ENCODE measurements at regions of chr2 and their contacts with region 1.

Region 1: GRCh38 chr2:42828487-42829425 is 36.4 kb upstream of the HAAO start:
- DNase-seq: peak; percentile 76 to 85 (median 82)
- H3K4me3 ChIP-seq: no peak overlapping the region
- H3K27ac ChIP-seq: no peak overlapping the region
- H3K4me1 ChIP-seq: peaks cover 0 to 26% (median 22%) of the 10 kb centered on the region in 4 experiments
- H3K27me3 ChIP-seq: no peaks in the 10 kb centered on the region

Region 2: GRCh38 chr2:42296226-42296625 is 532.5 kb before region 1 on chr2:
- CTCF ChIA-PET with region 1: no interaction called
- POLR2A ChIA-PET with region 1: no interaction called
- DNase-seq: no peak
- H3K4me3 ChIP-seq: no peak overlapping the region
- H3K27ac ChIP-seq: no peak overlapping the region
- H3K4me1 ChIP-seq: peaks cover 0 to 14% (median 3%) of the 10 kb centered on the region in 4 experiments
- H3K27me3 ChIP-seq: no peaks in the 10 kb centered on the region

Region 3: GRCh38 chr2:42810121-42810970 is 18.4 kb before region 1 on chr2:
- CTCF ChIA-PET with region 1: interaction called, 23 read pairs
- POLR2A ChIA-PET with region 1: interaction called, 7 read pairs
- DNase-seq: peak; percentile 95 to 98 (median 97)
- H3K4me3 ChIP-seq: peak overlapping the region; percentile 62 to 91 (median 75)
- H3K27ac ChIP-seq: peak overlapping the region; percentile 90 to 91
- H3K4me1 ChIP-seq: peaks cover 0 to 23% (median 18%) of the 10 kb centered on the region in 4 experiments
- H3K27me3 ChIP-seq: no peaks in the 10 kb centered on the region

Region 4: DNA sequence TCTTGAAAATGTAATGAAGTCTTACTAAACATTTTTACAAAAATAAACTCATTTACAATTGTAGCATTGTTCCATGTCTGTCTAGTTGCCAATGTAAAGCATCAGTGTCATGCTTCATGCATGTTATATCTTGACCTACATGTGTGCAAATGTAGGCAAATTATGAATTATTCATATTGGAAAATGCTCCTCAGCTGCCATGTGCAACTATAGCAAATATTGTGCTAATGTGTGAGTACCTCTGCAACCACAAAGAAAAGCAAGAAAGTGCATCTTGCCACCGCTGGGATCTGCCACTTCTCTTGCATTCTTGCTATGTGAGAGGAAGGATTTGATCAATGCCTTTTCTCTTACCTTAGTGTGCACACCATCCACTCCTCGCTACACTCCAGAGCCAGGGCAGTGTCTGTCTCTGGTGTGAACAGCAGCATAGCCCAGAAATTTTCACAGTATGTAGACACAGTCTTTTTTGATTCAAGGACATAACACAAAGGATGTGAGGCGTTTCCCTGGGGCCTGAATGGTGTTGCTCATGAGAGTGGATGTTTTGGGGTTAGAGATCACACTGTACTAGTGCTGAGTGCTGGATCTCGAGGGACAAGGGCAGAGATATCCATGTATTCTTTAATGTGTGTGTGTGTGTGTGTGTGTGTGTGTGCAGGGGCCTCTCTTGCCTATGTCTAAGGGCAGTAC is 11.2 kb after region 1 on chr2:
- CTCF ChIA-PET with region 1: interaction called, 21 read pairs
- POLR2A ChIA-PET with region 1: no interaction called
- DNase-seq: no peak
- H3K4me3 ChIP-seq: no peak overlapping the region
- H3K27ac ChIP-seq: no peak overlapping the region
- H3K4me1 ChIP-seq: peaks cover 0 to 17% (median 12%) of the 10 kb centered on the region in 4 experiments
- H3K27me3 ChIP-seq: no peaks in the 10 kb centered on the region

Region 5: GRCh38 chr2:42859006-42859552 is 30.3 kb after region 1 on chr2:
- CTCF ChIA-PET with region 1: interaction called, 34 read pairs
- POLR2A ChIA-PET with region 1: no interaction called
- DNase-seq: peak; percentile 84 to 93 (median 89)
- H3K4me3 ChIP-seq: no peak overlapping the region
- H3K27ac ChIP-seq: no peak overlapping the region
- H3K4me1 ChIP-seq: peaks cover 2 to 57% (median 45%) of the 10 kb centered on the region in 4 experiments
- H3K27me3 ChIP-seq: no peaks in the 10 kb centered on the region

Region 6: GRCh38 chr2:43484323-43484930 is 655.7 kb after region 1 on chr2:
- CTCF ChIA-PET with region 1: interaction called, 18 read pairs
- POLR2A ChIA-PET with region 1: no interaction called
- DNase-seq: peak; percentile 89 to 92 (median 91)
- H3K4me3 ChIP-seq: no peak overlapping the region
- H3K27ac ChIP-seq: no peak overlapping the region
- H3K4me1 ChIP-seq: peaks cover 8 to 29% (median 12%) of the 10 kb centered on the region in 4 experiments
- H3K27me3 ChIP-seq: no peaks in the 10 kb centered on the region

Region 7: DNA sequence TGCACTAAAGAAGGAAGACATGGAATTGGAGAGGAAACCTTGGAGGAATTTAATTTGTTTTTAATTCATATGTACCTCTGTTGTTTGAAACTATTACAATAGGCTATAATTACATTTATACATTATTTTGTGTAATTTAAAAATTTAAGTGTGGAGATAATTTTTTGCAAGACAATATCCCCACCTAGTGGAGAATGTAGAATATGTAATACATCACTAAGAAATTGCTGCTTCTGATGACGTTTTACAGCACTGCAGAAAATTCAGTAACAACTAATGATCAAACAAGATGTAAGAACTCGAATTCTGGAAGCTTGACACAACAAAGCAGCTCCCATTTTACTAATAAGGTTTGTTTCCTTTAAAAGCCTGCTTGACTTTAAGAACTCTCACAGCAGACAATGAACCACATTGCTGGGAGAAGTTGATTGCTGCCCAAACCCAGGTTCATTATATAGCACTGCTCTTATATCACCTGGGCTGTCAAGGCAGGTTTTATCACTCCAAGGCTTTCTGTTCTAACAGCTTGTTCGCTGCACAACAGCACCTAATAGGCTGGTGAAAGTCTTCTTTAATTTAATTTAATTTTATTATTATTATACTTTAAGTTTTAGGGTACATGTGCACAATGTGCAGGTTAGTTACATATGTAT is 713.7 kb after region 1 on chr2:
- CTCF ChIA-PET with region 1: interaction called, 13 read pairs
- POLR2A ChIA-PET with region 1: no interaction called
- DNase-seq: peak; percentile 68 to 85 (median 83)
- H3K4me3 ChIP-seq: no peak overlapping the region
- H3K27ac ChIP-seq: no peak overlapping the region
- H3K4me1 ChIP-seq: peaks cover 15 to 34% (median 22%) of the 10 kb centered on the region in 4 experiments
- H3K27me3 ChIP-seq: no peaks in the 10 kb centered on the region

Region 8: DNA sequence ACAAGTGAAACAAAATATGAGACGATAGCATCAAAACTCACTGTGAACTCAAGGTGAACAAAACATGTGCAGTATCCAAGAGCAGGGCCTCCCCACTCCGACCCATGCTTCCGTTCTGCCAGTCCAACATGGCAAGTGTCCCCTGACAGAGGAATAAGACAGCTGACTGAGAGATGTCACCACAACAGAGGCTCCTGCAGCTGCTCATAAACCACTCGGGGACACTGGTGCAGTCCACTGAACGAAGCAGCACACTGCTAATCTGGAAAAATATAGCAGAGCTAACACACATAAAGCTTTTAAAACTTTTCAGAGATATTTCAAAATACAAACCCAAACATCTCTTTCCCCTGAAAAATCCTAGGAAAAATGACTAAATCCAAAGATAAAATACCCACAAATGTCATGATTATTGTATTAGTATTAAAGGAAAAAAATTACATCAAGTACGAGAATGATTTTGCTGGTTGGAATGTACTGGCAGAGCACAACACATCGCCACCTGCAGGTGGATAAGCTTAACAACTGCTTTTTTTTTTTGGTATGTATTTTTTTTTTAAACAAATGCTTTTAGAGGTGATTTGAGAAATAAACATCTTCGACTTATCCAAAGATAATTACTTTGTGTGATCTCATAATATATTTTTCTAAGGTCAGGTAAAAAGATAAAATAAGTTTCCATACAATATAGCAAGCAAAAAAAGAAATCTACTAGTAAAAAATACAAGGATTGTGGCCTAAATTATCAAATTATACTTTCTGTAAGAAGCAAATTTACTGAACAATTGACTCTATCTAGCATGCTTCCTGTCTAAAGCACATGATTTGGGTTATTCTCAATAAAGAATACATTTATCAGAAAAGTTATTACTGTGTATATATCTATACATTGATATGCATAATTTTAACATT is 748.5 kb after region 1 on chr2:
- CTCF ChIA-PET with region 1: interaction called, 10 read pairs
- POLR2A ChIA-PET with region 1: no interaction called
- DNase-seq: peak; percentile 68 to 85 (median 85)
- H3K4me3 ChIP-seq: no peak overlapping the region
- H3K27ac ChIP-seq: no peak overlapping the region
- H3K4me1 ChIP-seq: no peaks in the 10 kb centered on the region
- H3K27me3 ChIP-seq: no peaks in the 10 kb centered on the region